ENCODE measurements at regions of chr20 and their contacts with region 1.

Region 1: DNA sequence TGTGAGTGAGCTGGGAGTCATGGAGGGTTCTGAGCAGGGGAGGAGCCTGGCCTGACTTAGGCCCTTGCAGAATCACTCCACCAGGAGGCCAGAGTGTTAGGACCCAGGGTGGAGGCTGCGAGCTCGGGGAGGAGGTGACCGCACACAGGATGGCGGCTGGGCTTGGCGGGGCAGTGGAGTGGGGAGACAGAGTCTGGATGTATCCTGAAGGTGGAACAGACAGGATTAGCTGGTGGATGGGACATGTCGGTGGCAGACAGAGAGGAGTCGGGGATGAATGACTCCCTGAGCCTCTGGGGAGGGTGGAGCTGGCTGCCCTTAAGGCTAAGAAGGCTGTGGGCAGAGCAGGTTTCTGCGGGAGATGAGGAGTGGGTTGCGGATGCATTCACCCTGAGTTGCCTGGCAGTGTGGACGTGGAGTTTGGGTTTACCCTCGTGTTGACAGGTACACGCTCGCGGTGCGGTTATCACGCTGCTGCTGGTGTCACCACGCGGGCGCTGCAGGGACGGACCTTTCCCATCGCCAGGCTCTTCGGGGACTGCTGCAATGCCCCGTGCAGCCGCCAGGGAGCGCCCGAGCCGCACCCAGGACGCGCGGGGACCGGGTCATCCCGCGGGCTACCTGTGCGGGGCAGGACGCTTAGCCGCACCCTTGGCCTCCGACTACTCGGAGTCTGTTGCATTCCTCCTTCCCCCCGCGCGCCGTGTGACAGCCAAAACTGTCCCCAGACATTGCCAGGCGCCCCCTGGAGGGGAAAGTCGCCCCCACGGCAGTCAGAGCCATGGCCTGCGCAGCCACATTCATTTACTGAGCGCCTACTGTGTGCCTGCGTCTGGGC is 43.0 kb upstream of the PTGIS start:
- DNase-seq: peak; percentile 87
- CTCF ChIP-seq: peak; percentile 97

Region 2: GRCh38 chr20:49335476-49335875 is 275.4 kb before region 1 on chr20:
- CTCF ChIA-PET with region 1: interaction called, 28 read pairs
- POLR2A ChIA-PET with region 1: interaction called, 7 read pairs
- DNase-seq: no peak
- CTCF ChIP-seq: no peak

Region 3: GRCh38 chr20:49559401-49560081 is 51.4 kb before region 1 on chr20:
- CTCF ChIA-PET with region 1: interaction called, 14 read pairs
- POLR2A ChIA-PET with region 1: no interaction called
- DNase-seq: no peak
- CTCF ChIP-seq: no peak

Region 4: GRCh38 chr20:49631061-49631788 is 20.3 kb after region 1 on chr20:
- CTCF ChIA-PET with region 1: interaction called, 62 read pairs
- POLR2A ChIA-PET with region 1: interaction called, 3 read pairs
- DNase-seq: peak; percentile 60
- CTCF ChIP-seq: no peak

Region 5: GRCh38 chr20:49713753-49714712 is 103.1 kb after region 1 on chr20 and contains the start of gene B4GALT5:
- CTCF ChIA-PET with region 1: interaction called, 10 read pairs
- POLR2A ChIA-PET with region 1: no interaction called
- DNase-seq: peak; percentile 89
- CTCF ChIP-seq: no peak

Region 6: GRCh38 chr20:49846206-49846807 is 235.4 kb after region 1 on chr20:
- CTCF ChIA-PET with region 1: interaction called, 72 read pairs
- POLR2A ChIA-PET with region 1: no interaction called
- DNase-seq: peak; percentile 71
- CTCF ChIP-seq: peak; percentile 46

Measured in GM10248 (cell line).